CD14-positive monocyte (primary cell): ENCODE measurements at regions of chr1 and their contacts with region 1.

Region 1: GRCh38 chr1:173190101-173190906 is 16.8 kb downstream of the TNFSF4 start:
- DNase-seq: peak; percentile 33 to 56 (median 42)
- H3K4me3 ChIP-seq: no peak overlapping the region
- H3K4me3 Mint-ChIP-seq: no peak overlapping the region
- H3K27ac ChIP-seq: peak overlapping the region in 1 of 2 donors; percentile 52
- H3K27ac Mint-ChIP-seq: peak overlapping the region in 5 of 7 donors; percentile 45 to 77 (median 72)
- H3K4me1 ChIP-seq: peaks cover 17 to 22% of the 10 kb centered on the region in 2 donors
- H3K4me1 Mint-ChIP-seq: peaks cover 32% of the 10 kb centered on the region
- H3K27me3 ChIP-seq: no peaks in the 10 kb centered on the region
- H3K27me3 Mint-ChIP-seq: no peaks in the 10 kb centered on the region
- CTCF ChIP-seq: no peak

Region 2: GRCh38 chr1:172818841-172819527 is 371.3 kb before region 1 on chr1:
- intact Hi-C with region 1: loop called in 1 of 2 experiments (anchors 10 kb)
- DNase-seq: peak; percentile 77 to 82 (median 82)
- H3K4me3 ChIP-seq: no peak overlapping the region
- H3K4me3 Mint-ChIP-seq: no peak overlapping the region
- H3K27ac ChIP-seq: peak overlapping the region in 1 of 2 donors; percentile 73
- H3K27ac Mint-ChIP-seq: peak overlapping the region; percentile 43 to 91 (median 86)
- H3K4me1 ChIP-seq: peaks cover 15 to 23% of the 10 kb centered on the region in 2 donors
- H3K4me1 Mint-ChIP-seq: peaks cover 32% of the 10 kb centered on the region
- H3K27me3 ChIP-seq: no peaks in the 10 kb centered on the region
- H3K27me3 Mint-ChIP-seq: peaks cover 0 to 2% (median 2%) of the 10 kb centered on the region in 3 donors
- CTCF ChIP-seq: no peak

Region 3: DNA sequence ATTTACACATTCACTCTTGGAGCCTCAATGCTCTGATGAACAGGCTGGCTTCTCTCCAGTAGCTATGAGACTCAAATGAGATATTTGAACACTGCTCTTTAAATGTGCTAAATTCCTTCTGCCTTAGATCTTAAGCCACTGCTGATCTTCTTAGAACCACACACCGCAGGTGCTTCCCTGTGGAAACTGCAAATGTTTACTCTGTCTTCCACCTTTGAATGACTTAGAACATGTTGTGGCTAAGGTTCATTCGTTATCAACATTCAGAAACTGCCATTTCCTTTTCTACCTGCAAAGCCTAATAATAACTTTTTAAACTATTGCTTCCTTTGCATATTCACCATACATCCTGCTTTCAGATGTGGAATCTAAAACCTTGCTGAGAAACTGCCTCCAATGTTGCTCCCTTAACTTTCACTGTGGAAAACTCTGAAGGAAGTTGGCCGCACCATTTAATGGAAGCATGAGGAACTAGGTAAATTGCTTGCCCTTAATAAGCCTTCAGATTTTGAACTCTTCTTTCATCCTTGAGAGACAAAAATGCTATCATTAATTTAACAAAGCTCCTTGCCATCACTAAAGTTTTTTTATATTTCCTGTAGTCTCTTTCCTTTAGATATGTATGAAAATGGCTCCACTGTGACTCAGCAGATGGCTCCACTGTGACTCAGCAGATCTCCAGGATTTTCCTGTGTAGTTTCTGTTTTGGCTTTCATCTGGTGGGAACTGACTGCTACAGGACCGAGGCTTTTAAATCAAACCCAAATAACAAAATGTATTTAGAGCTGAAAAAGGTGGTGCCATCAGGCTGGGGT is 283.3 kb before region 1 on chr1:
- intact Hi-C with region 1: no loop called
- DNase-seq: peak in 2 of 3 donors; percentile 12 to 31
- H3K4me3 ChIP-seq: no peak overlapping the region
- H3K4me3 Mint-ChIP-seq: no peak overlapping the region
- H3K27ac ChIP-seq: no peak overlapping the region
- H3K27ac Mint-ChIP-seq: peak overlapping the region in 1 of 7 donors; percentile 52
- H3K4me1 ChIP-seq: no peaks in the 10 kb centered on the region
- H3K4me1 Mint-ChIP-seq: peaks cover 4% of the 10 kb centered on the region
- H3K27me3 ChIP-seq: no peaks in the 10 kb centered on the region
- H3K27me3 Mint-ChIP-seq: no peaks in the 10 kb centered on the region
- CTCF ChIP-seq: no peak

Region 4: GRCh38 chr1:173050865-173051264 is 139.4 kb before region 1 on chr1 and contains the start of gene TNFSF18:
- intact Hi-C with region 1: loop called in 1 of 2 experiments (anchors 10 kb)
- DNase-seq: peak; percentile 34 to 64 (median 43)
- H3K4me3 ChIP-seq: no peak within 1 kb of the TSS
- H3K4me3 Mint-ChIP-seq: peak within 1 kb of the TSS in 1 of 2 donors; percentile 83
- H3K27ac ChIP-seq: no peak within 1 kb of the TSS
- H3K27ac Mint-ChIP-seq: peak within 1 kb of the TSS; percentile 18 to 84 (median 57)
- H3K4me1 ChIP-seq: peaks cover 33 to 53% of the 10 kb centered on the region in 2 donors
- H3K4me1 Mint-ChIP-seq: peaks cover 46% of the 10 kb centered on the region
- H3K27me3 ChIP-seq: no peaks in the 10 kb centered on the region
- H3K27me3 Mint-ChIP-seq: peaks cover 0 to 2% (median 0%) of the 10 kb centered on the region in 3 donors
- CTCF ChIP-seq: no peak
- polyA plus RNA-seq, gene TNFSF18: not detected

Region 5: DNA sequence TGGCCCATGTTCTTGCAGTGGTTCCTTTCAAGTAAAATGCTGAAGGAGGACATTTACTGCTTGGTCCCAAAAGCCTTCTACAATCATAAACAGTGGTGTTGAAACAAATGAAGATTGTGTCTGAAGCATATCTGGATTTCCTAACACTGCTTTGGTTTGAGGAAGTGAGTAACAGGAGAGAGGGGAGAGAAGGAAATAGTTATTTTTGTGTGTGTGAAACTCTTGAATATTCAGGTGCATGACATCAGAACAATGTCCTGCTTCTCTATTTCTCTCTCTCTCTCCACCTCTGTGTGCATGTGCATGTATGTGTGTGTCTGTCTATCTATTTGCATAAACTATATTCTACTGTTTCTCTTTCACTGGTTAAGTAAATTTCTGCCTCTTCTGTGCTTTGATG is 78.2 kb before region 1 on chr1:
- intact Hi-C with region 1: loop called in 1 of 2 experiments (anchors 5 kb)
- DNase-seq: peak; percentile 84 to 91 (median 85)
- H3K4me3 ChIP-seq: no peak overlapping the region
- H3K4me3 Mint-ChIP-seq: peak overlapping the region in 1 of 2 donors; percentile 64
- H3K27ac ChIP-seq: peak overlapping the region in 1 of 2 donors; percentile 83
- H3K27ac Mint-ChIP-seq: peak overlapping the region; percentile 68 to 93 (median 87)
- H3K4me1 ChIP-seq: peaks cover 32 to 48% of the 10 kb centered on the region in 2 donors
- H3K4me1 Mint-ChIP-seq: peaks cover 39% of the 10 kb centered on the region
- H3K27me3 ChIP-seq: no peaks in the 10 kb centered on the region
- H3K27me3 Mint-ChIP-seq: peaks cover 0 to 2% (median 0%) of the 10 kb centered on the region in 3 donors
- CTCF ChIP-seq: no peak